Activated CD4-positive, alpha-beta memory T cell treated with anti-CD3 and anti-CD28 coated beads, Interleukin-2, amount 10 ng/mL, durations not matched to agents 7 days and 5 days (primary cell): ENCODE measurements at regions of chr5 and their contacts with region 1.

Region 1: DNA sequence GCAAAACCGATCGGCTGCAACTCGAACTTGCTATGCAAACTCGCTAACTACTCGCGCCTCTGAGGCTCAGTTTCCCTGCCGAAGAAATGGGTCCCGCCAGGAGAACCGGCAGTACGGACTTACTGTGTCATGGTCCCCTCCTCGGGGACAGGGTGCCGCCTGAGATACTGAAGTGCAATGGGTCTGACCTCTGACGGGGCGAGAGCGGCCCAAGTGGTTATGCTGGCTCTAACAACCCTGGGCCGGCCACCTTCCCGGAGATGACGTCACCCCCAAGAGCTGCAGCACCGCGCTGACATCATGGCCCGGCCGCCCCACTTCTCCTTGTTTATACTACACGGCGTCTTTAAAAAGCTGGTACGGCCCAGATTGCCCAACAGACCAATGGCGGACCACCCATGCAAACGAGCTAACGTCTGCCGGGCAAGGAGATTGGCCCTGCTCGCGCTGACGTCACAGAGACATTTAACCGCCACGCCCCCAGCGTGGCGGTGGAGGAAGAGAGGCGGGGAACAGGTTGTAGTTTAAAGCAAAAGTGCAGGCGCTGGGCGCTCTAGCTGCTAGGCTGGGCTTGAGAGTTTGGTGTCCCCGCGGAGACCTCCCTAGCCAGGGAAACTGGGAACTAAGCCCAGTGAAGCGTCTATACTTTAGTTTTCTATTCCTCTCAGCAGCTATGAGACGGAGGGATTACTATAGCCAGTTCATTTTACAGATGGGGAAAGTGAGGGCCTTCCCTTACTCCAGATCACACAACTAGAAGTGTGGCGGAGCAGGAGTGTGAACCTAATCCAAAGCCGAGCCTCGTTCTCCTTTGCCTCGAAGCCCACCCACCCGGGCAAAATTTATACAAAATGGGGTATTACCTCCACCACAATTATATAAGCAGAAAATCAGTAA is 654 bp upstream of the RNF44 start:
- DNase-seq: peak; percentile 99
- H3K4me3 Mint-ChIP-seq: peak overlapping the region; percentile 97
- H3K27ac Mint-ChIP-seq: peak overlapping the region; percentile 95
- H3K4me1 Mint-ChIP-seq: peaks cover 69% of the 10 kb centered on the region
- H3K27me3 Mint-ChIP-seq: no peaks in the 10 kb centered on the region

Region 2: GRCh38 chr5:176361437-176362232 is 176.2 kb before region 1 on chr5 and contains the start of gene KIAA1191:
- CTCF ChIA-PET with region 1: no interaction called
- POLR2A ChIA-PET with region 1: interaction called, 11 read pairs
- DNase-seq: peak; percentile 97
- H3K4me3 Mint-ChIP-seq: peak within 1 kb of the TSS; percentile 97
- H3K27ac Mint-ChIP-seq: peak within 1 kb of the TSS; percentile 92
- H3K4me1 Mint-ChIP-seq: peaks cover 42% of the 10 kb centered on the region
- H3K27me3 Mint-ChIP-seq: no peaks in the 10 kb centered on the region
- total RNA-seq, gene KIAA1191: 50.5 to 54.5 TPM

Region 3: GRCh38 chr5:176415952-176416924 is 121.6 kb before region 1 on chr5 and contains the start of gene CLTB:
- CTCF ChIA-PET with region 1: interaction called, 19 read pairs
- POLR2A ChIA-PET with region 1: interaction called, 26 read pairs
- DNase-seq: peak; percentile 91
- H3K4me3 Mint-ChIP-seq: peak within 1 kb of the TSS; percentile 82
- H3K27ac Mint-ChIP-seq: peak within 1 kb of the TSS; percentile 71
- H3K4me1 Mint-ChIP-seq: peaks cover 39% of the 10 kb centered on the region
- H3K27me3 Mint-ChIP-seq: peaks cover 10% of the 10 kb centered on the region
- total RNA-seq, gene CLTB: 56.2 to 57.2 TPM

Region 4: GRCh38 chr5:176490301-176490700 is 47.6 kb before region 1 on chr5:
- CTCF ChIA-PET with region 1: interaction called, 8 read pairs
- POLR2A ChIA-PET with region 1: interaction called, 15 read pairs
- DNase-seq: no peak
- H3K4me3 Mint-ChIP-seq: no peak overlapping the region
- H3K27ac Mint-ChIP-seq: no peak overlapping the region
- H3K4me1 Mint-ChIP-seq: peaks cover 34% of the 10 kb centered on the region
- H3K27me3 Mint-ChIP-seq: no peaks in the 10 kb centered on the region

Region 5: GRCh38 chr5:176647030-176647866 is 109.4 kb after region 1 on chr5 and contains the start of gene TSPAN17:
- CTCF ChIA-PET with region 1: no interaction called
- POLR2A ChIA-PET with region 1: interaction called, 10 read pairs
- DNase-seq: peak; percentile 100
- H3K4me3 Mint-ChIP-seq: peak within 1 kb of the TSS; percentile 83
- H3K27ac Mint-ChIP-seq: peak within 1 kb of the TSS; percentile 76
- H3K4me1 Mint-ChIP-seq: peaks cover 49% of the 10 kb centered on the region
- H3K27me3 Mint-ChIP-seq: no peaks in the 10 kb centered on the region
- total RNA-seq, gene TSPAN17: 33.3 to 33.4 TPM

Region 6: DNA sequence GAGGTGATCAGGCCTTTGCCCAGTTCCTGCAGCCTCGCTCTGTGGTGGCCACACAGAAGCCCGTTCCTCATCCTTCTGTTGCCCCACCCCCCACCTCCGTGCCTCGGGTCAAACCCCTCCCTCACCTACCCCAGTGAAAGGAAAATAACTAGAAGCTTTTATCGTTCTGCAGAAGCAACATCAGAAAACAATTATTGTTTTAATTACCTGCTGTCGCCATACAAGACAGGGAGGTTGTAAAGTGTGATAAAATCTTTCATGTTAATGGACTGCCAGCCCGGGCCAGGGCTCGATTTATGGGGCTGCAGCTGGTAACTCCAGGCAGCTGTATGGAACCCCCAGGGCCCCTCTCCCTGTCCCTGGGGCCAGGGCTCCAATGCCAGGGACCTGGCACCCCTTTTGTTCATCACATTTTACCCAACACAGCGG is 293.2 kb after region 1 on chr5:
- CTCF ChIA-PET with region 1: no interaction called
- POLR2A ChIA-PET with region 1: no interaction called
- DNase-seq: no peak
- H3K4me3 Mint-ChIP-seq: no peak overlapping the region
- H3K27ac Mint-ChIP-seq: no peak overlapping the region
- H3K4me1 Mint-ChIP-seq: no peaks in the 10 kb centered on the region
- H3K27me3 Mint-ChIP-seq: no peaks in the 10 kb centered on the region